ENCODE measurements at regions of chrX and their contacts with region 1.

Region 1: DNA sequence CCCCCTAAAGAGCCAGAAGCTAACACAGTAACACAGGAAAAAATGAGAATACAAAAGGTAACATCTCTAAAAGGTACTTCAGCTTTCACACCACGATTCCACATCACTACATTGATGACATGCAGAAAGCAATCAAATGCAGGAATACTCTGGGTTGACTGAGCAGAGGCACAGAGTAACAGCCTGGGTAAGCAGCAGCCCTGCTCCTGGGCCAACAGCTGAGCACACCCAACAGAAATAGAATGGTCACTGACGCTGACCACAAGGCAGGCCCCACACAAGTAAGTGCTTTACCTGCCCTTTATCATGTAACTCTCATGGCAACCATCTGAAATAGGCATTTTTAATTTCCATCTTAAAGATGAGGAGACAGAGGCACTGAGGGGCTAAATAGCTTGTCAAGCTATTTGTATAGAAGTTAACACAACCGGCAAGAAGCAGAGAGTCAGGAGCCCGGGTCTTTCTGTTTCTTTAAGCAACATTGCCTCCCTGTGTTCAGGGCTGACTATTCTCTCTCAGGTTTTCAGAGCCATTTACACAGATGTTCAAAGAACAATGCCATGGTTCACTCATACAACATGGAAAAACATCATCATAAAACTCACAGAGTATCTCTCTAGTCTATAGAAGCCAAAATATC is 168.9 kb downstream of the ZNF674 start:
- DNase-seq: peak; percentile 59 to 85
- ATAC-seq: peak; percentile 95 to 96
- H3K4me3 ChIP-seq: no peak overlapping the region
- H3K27ac ChIP-seq: peak overlapping the region; percentile 75 to 95
- H3K4me1 ChIP-seq: peaks cover 36% of the 10 kb centered on the region
- CTCF ChIP-seq: peak; percentile 73
- EP300 ChIP-seq: no peak
- POLR2A ChIP-seq: no peak
- RAD21 ChIP-seq: peak; percentile 90 to 95

Region 2: DNA sequence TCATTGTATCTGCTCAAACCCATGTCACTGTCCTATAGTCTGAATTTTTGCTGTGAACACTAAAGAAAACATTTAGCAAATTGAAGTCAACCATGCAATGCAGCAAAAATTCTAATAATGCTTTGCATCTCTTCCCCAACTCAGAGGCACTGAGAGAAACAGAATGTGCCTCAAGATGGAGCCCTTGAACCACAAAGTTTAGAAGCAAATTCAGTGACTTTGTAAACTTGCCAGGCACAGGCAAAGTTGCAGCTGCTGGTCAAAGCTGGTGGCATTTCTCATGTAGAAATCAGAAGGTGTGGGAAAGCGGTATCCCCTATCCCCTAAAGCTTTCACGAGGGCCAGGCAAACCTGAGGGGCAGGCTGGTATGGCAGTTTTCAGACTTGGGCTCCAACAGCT is 1054.0 kb before region 1 on chrX:
- CTCF ChIA-PET with region 1: interaction called, 17 read pairs
- POLR2A ChIA-PET with region 1: no interaction called
- DNase-seq: peak; percentile 16 to 81
- ATAC-seq: peak; percentile 88 to 90
- H3K4me3 ChIP-seq: no peak overlapping the region
- H3K27ac ChIP-seq: peak overlapping the region; percentile 80 to 87
- H3K4me1 ChIP-seq: peaks cover 12% of the 10 kb centered on the region
- CTCF ChIP-seq: peak; percentile 67
- EP300 ChIP-seq: no peak
- POLR2A ChIP-seq: no peak
- RAD21 ChIP-seq: peak; percentile 88 to 91

Region 3: GRCh38 chrX:45815441-45815840 is 560.9 kb before region 1 on chrX:
- CTCF ChIA-PET with region 1: interaction called, 13 read pairs
- POLR2A ChIA-PET with region 1: no interaction called
- DNase-seq: no peak
- ATAC-seq: no peak
- H3K4me3 ChIP-seq: no peak overlapping the region
- H3K27ac ChIP-seq: no peak overlapping the region
- H3K4me1 ChIP-seq: peaks cover 22% of the 10 kb centered on the region
- CTCF ChIP-seq: no peak
- EP300 ChIP-seq: no peak
- POLR2A ChIP-seq: no peak
- RAD21 ChIP-seq: no peak

Region 4: DNA sequence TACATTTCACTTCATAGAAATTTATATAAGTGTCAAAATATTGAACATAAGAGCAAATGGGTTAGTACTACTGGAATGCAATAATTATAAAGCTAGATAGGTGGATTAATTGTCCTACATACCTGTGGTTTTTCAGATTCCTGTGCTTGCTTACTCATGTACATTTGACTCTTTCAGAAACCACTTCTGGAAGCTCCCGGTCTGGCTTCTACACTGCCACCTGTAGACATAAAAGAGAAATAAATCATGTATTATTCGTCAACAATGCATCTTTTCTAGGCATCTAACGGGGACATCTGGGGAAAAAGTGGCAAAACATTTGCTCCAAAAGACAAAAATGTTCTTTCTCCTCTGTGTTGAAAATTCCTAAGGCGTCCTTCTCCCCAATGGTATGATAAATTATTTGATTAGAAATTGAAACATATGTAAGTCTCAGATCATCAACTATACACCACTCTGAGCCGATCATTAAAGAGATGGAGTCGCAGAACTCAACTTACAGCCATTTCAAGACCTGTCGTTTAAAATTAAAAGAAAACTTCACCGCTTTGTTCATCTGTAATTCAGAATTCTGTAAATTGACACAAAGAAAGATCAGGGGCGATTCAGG is 527.0 kb before region 1 on chrX:
- CTCF ChIA-PET with region 1: interaction called, 20 read pairs
- POLR2A ChIA-PET with region 1: interaction called, 15 read pairs
- DNase-seq: peak; percentile 43 to 76
- ATAC-seq: peak in 1 of 2 experiments; percentile 20; a peak in 3 of 6 replicates
- H3K4me3 ChIP-seq: peak overlapping the region; percentile 99
- H3K27ac ChIP-seq: peak overlapping the region; percentile 96 to 99
- H3K4me1 ChIP-seq: peaks cover 44% of the 10 kb centered on the region
- CTCF ChIP-seq: peak; percentile 51
- EP300 ChIP-seq: no peak
- POLR2A ChIP-seq: no peak
- RAD21 ChIP-seq: peak; percentile 37 to 38; a peak in 4 of 5 replicates

Region 5: DNA sequence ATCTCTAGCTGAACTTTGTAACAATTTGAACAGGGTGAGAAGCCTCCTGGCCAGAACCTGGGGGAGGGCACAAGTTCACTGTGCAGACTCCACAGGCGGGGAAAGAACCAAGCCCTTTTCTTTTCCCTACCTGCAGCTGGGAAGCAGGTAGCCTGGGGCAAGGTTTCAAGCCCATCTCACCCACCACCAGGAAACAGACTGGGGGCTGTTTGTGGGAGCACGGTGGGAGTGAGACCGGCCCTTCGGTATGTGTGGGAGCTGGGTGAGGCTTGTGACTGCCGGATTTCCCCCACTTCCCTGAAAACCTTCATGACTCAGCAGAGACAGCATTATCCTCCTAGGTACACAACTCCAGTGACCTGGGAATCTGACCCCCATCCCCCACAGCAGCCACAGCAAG is 42.8 kb before region 1 on chrX:
- CTCF ChIA-PET with region 1: interaction called, 15 read pairs
- POLR2A ChIA-PET with region 1: no interaction called
- DNase-seq: peak in 1 of 2 experiments; percentile 95
- ATAC-seq: peak; percentile 91 to 93
- H3K4me3 ChIP-seq: peak overlapping the region; percentile 29; the same call in 1 of the 3 replicates
- H3K27ac ChIP-seq: peak overlapping the region; percentile 99 to 100
- H3K4me1 ChIP-seq: peaks cover 36% of the 10 kb centered on the region
- CTCF ChIP-seq: no peak
- EP300 ChIP-seq: peak; percentile 79 to 93; a peak in 4 of 5 replicates
- POLR2A ChIP-seq: no peak
- RAD21 ChIP-seq: peak; percentile 1 to 46; a peak in 3 of 5 replicates

Region 6: GRCh38 chrX:46398126-46398525 is 21.8 kb after region 1 on chrX:
- CTCF ChIA-PET with region 1: no interaction called
- POLR2A ChIA-PET with region 1: no interaction called
- DNase-seq: no peak
- ATAC-seq: no peak
- H3K4me3 ChIP-seq: no peak overlapping the region
- H3K27ac ChIP-seq: no peak overlapping the region
- H3K4me1 ChIP-seq: no peaks in the 10 kb centered on the region
- CTCF ChIP-seq: no peak
- EP300 ChIP-seq: no peak
- POLR2A ChIP-seq: no peak
- RAD21 ChIP-seq: no peak

Region 7: DNA sequence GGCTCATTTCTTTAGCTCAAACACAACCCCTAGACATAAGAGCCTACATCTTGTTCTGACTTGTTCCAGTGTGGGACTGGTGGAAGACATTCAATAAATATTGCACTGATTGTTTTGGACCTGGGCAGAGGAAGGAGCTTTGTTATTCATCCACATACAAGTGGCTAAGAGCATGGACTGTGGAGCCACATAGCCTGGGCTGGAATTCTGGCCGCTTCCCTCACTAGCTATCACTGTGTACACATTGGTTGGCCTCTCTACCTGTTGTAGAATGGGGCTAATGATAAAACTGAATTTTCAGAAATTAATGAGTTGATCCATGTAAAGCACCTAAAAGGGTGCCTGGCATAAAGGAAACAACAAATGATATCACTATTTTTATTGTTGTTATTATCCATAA is 88.8 kb after region 1 on chrX:
- CTCF ChIA-PET with region 1: no interaction called
- POLR2A ChIA-PET with region 1: no interaction called
- DNase-seq: no peak
- ATAC-seq: no peak
- H3K4me3 ChIP-seq: no peak overlapping the region
- H3K27ac ChIP-seq: no peak overlapping the region
- H3K4me1 ChIP-seq: no peaks in the 10 kb centered on the region
- CTCF ChIP-seq: no peak
- EP300 ChIP-seq: no peak
- POLR2A ChIP-seq: no peak
- RAD21 ChIP-seq: no peak

Measured in A549 (cell line).